ENCODE measurements at regions of chr3 and their contacts with region 1.

Region 1: DNA sequence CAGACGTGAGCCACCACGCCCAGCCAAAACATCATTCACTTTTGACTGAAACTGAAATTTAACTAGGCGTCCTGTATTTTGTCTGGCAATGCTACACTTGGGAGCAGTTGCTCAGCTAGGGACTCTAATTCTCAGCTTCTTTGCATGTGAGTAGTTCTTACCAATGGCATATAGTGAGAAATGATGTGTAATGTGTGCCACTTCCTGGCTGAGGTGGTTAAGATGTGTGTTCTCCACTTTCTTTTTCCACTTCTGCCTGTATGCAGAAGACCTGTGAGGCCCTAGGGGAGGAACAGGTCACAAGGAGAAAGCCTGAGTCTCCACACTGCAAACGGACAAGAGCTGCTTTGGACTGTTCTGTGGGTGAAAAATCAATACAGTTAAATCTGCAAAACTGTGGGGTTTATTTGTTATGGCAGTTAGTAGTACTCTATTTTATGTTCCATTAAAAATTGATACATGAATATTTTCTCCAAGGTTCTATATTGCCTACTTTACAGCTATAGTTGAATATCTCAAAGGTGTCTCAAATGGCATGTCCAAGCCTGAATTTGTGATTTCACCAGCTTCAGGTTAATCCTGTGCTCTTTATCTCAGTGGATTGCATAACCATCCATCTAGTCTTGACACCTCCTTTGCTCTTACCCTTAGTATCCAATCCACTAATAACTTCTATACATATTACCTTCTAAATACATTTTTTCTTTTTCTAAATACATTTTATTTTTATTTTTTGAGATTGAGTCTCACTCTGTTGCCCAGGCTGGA is 59.3 kb downstream of the NR1D2 start:
- DNase-seq: peak; percentile 58
- H3K4me3 Mint-ChIP-seq: no peak overlapping the region
- H3K27ac Mint-ChIP-seq: peak overlapping the region; percentile 28
- H3K4me1 Mint-ChIP-seq: peaks cover 11% of the 10 kb centered on the region
- H3K27me3 Mint-ChIP-seq: peaks cover 4% of the 10 kb centered on the region

Region 2: GRCh38 chr3:23834082-23834870 is 170.1 kb before region 1 on chr3:
- CTCF ChIA-PET with region 1: no interaction called
- intact Hi-C with region 1: loop called (anchors 5 kb)
- DNase-seq: no peak
- H3K4me3 Mint-ChIP-seq: no peak overlapping the region
- H3K27ac Mint-ChIP-seq: no peak overlapping the region
- H3K4me1 Mint-ChIP-seq: peaks cover 51% of the 10 kb centered on the region
- H3K27me3 Mint-ChIP-seq: no peaks in the 10 kb centered on the region

Region 3: GRCh38 chr3:23959135-23959900 is 45.0 kb before region 1 on chr3:
- CTCF ChIA-PET with region 1: no interaction called
- intact Hi-C with region 1: loop called (anchors 1 kb)
- DNase-seq: peak; percentile 37
- H3K4me3 Mint-ChIP-seq: no peak overlapping the region
- H3K27ac Mint-ChIP-seq: peak overlapping the region; percentile 4
- H3K4me1 Mint-ChIP-seq: peaks cover 27% of the 10 kb centered on the region
- H3K27me3 Mint-ChIP-seq: no peaks in the 10 kb centered on the region

Region 4: DNA sequence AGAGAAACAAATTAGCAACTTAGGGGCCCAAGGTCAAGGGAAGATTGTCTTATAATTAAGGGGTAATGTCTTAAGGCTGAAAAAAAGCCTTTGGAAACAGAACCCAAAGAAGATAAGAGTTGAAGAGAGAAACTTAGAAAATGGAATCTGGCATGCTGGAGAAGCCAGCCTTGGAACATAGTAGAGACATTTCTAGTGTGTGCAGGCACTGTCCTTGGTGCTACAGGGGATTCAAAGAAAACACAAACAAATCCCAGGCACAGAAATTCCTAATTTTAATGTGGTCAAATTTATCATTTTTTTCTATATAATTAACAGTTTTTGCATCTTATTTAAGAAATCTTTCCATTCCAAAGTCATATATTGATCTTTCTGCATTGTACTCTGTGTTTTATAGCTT is 30.1 kb after region 1 on chr3:
- CTCF ChIA-PET with region 1: no interaction called
- intact Hi-C with region 1: no loop called
- DNase-seq: no peak
- H3K4me3 Mint-ChIP-seq: no peak overlapping the region
- H3K27ac Mint-ChIP-seq: no peak overlapping the region
- H3K4me1 Mint-ChIP-seq: no peaks in the 10 kb centered on the region
- H3K27me3 Mint-ChIP-seq: peaks cover 3% of the 10 kb centered on the region

Region 5: GRCh38 chr3:24047513-24047912 is 43.2 kb after region 1 on chr3:
- CTCF ChIA-PET with region 1: interaction called, 3 read pairs
- intact Hi-C with region 1: loop called (anchors 1 kb)
- DNase-seq: no peak
- H3K4me3 Mint-ChIP-seq: no peak overlapping the region
- H3K27ac Mint-ChIP-seq: no peak overlapping the region
- H3K4me1 Mint-ChIP-seq: peaks cover 10% of the 10 kb centered on the region
- H3K27me3 Mint-ChIP-seq: peaks cover 5% of the 10 kb centered on the region

Region 6: GRCh38 chr3:24088782-24089181 is 84.4 kb after region 1 on chr3:
- CTCF ChIA-PET with region 1: no interaction called
- intact Hi-C with region 1: loop called (anchors 5 kb)
- DNase-seq: no peak
- H3K4me3 Mint-ChIP-seq: no peak overlapping the region
- H3K27ac Mint-ChIP-seq: no peak overlapping the region
- H3K4me1 Mint-ChIP-seq: no peaks in the 10 kb centered on the region
- H3K27me3 Mint-ChIP-seq: peaks cover 5% of the 10 kb centered on the region

Measured in activated naive CD4-positive, alpha-beta T cell treated with anti-CD3 and anti-CD28 coated beads for 36 hours (primary cell).